Activated B cell treated with CpG ODN at 0.5 μM for 24 hours (primary cell): ENCODE measurements at regions of chr1 and their contacts with region 1.

Region 1: DNA sequence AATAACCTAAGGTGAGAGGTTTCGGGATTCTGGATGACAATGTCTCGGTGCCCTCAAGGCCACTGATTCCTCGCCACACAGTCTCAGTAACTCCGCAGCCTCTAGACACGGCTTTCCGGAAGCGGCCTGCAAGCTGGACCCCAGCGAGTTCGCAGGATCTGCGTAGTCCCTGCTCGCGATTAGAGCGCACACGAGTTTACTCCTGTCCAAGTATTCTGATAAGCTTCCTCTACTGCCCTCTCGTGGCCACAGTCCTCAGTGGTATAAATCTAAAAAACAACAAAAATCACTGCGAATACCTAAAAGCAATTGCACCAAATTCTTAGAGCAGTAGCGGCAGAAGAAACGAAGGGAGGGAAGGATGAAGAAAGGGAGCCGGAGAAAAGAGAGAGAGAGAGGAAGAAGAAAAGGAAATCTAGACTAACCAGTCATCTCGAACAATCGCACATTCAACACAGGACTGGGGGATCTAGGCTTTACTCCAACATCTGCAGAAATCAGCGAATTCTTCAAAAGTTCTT is 1.1 kb upstream of the PLXNA2 start:
- DNase-seq: peak; percentile 45
- ATAC-seq: peak; percentile 69
- H3K4me3 Mint-ChIP-seq: peak overlapping the region; percentile 87
- H3K27ac Mint-ChIP-seq: peak overlapping the region; percentile 54
- H3K4me1 Mint-ChIP-seq: peaks cover 13% of the 10 kb centered on the region
- H3K27me3 Mint-ChIP-seq: peaks cover 6% of the 10 kb centered on the region
- CTCF ChIP-seq: no peak

Region 2: DNA sequence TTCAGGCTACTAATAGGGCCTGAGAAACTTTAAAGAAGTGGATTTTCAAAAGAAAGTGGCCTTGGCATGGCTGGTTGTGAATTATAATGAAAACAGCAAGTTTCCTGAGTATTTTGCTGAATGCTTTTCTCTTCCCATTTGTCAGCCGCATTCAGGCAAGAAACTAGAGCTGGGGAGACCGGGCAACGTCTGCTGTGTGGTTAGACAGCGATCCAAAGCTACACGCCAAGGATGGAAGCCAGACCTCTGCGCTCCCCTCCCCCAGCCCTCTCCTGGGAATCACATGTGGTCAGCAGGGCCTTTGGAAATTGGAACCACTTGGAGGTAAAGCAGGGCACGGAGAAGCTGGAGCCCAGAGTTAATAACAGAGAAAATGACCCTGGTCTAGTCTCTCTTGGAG is 220.2 kb before region 1 on chr1:
- CTCF ChIA-PET with region 1: interaction called, 52 read pairs
- POLR2A ChIA-PET with region 1: no interaction called
- intact Hi-C with region 1: loop called (anchors 1 kb)
- DNase-seq: no peak
- ATAC-seq: no peak
- H3K4me3 Mint-ChIP-seq: no peak overlapping the region
- H3K27ac Mint-ChIP-seq: no peak overlapping the region
- H3K4me1 Mint-ChIP-seq: no peaks in the 10 kb centered on the region
- H3K27me3 Mint-ChIP-seq: peaks cover 6% of the 10 kb centered on the region
- CTCF ChIP-seq: no peak

Region 3: GRCh38 chr1:208036109-208036808 is 209.0 kb before region 1 on chr1:
- CTCF ChIA-PET with region 1: no interaction called
- POLR2A ChIA-PET with region 1: no interaction called
- intact Hi-C with region 1: loop called (anchors 5 kb)
- DNase-seq: no peak
- ATAC-seq: no peak
- H3K4me3 Mint-ChIP-seq: no peak overlapping the region
- H3K27ac Mint-ChIP-seq: no peak overlapping the region
- H3K4me1 Mint-ChIP-seq: no peaks in the 10 kb centered on the region
- H3K27me3 Mint-ChIP-seq: no peaks in the 10 kb centered on the region
- CTCF ChIP-seq: no peak

Region 4: DNA sequence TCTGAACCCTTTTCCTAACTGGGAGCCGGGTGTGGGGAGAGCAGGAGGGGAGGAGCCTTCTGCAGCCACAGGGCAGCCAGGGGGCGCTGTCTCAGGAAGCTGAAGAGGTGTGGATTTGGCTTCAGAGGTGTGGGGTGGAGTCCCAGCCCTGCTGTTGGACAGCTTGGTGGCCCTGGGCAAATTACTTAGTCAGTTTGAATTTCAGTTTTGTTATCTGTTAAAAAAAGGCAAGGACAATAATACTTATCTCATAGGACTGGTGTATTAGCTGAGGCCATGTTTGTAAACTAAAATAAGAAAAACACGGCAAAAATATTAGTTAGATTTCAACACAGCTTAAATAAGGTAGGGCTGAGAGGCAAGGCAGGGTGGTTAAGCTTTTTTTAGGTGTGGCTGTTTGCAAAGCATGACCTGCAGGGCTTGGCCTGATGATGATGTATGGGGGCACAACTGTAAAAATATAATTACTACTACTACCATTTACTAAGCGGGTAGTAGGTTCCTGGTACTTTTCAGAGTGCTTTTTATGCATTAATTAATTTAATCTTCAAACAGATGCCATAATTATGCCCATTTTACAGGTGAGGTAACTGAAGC is 112.9 kb before region 1 on chr1:
- CTCF ChIA-PET with region 1: interaction called, 33 read pairs
- POLR2A ChIA-PET with region 1: no interaction called
- intact Hi-C with region 1: loop called (anchors 1 kb)
- DNase-seq: peak; percentile 32
- ATAC-seq: no peak
- H3K4me3 Mint-ChIP-seq: no peak overlapping the region
- H3K27ac Mint-ChIP-seq: no peak overlapping the region
- H3K4me1 Mint-ChIP-seq: peaks cover 8% of the 10 kb centered on the region
- H3K27me3 Mint-ChIP-seq: peaks cover 23% of the 10 kb centered on the region
- CTCF ChIP-seq: peak; percentile 21

Region 5: DNA sequence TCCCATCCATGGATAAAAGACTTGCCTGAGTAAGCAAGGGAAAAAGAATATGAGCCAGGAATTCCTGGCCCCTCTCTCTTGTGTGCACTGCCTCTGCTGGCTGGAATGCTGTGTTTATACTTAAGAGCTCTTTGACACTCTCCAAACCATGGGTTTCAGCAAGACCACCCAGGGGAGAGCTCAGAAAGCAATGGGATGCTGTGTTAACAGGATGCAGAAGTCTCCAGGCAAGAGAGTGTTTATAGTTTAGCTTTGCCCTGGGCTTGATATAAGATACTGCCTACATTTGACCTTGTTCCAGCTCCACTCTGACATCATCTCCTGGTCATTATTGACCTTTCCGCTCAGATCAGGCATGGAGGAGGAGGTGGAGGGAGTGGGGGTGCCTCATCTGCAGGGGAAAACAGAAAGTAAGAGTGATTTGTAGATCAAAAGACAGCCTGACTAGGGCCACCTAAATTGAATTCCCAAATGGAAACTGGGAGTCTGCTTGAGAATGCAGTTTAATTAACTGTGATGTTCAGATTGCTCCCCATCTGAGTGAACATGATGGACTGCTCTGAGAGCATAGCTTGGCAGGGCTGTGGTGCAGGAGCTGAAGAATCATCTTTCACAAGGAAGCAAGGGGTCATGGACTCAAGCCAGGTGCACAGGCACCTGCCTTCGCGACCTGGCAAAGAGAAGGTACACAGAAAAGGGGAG is 231.2 kb after region 1 on chr1:
- CTCF ChIA-PET with region 1: no interaction called
- POLR2A ChIA-PET with region 1: no interaction called
- intact Hi-C with region 1: no loop called
- DNase-seq: no peak
- ATAC-seq: no peak
- H3K4me3 Mint-ChIP-seq: no peak overlapping the region
- H3K27ac Mint-ChIP-seq: no peak overlapping the region
- H3K4me1 Mint-ChIP-seq: no peaks in the 10 kb centered on the region
- H3K27me3 Mint-ChIP-seq: peaks cover 2% of the 10 kb centered on the region
- CTCF ChIP-seq: no peak

Region 6: GRCh38 chr1:208681878-208682663 is 436.8 kb after region 1 on chr1:
- CTCF ChIA-PET with region 1: no interaction called
- POLR2A ChIA-PET with region 1: no interaction called
- intact Hi-C with region 1: no loop called
- DNase-seq: no peak
- ATAC-seq: no peak
- H3K4me3 Mint-ChIP-seq: no peak overlapping the region
- H3K27ac Mint-ChIP-seq: no peak overlapping the region
- H3K4me1 Mint-ChIP-seq: no peaks in the 10 kb centered on the region
- H3K27me3 Mint-ChIP-seq: peaks cover 14% of the 10 kb centered on the region
- CTCF ChIP-seq: no peak